ENCODE measurements at regions of chr2 and their contacts with region 1.

Region 1: DNA sequence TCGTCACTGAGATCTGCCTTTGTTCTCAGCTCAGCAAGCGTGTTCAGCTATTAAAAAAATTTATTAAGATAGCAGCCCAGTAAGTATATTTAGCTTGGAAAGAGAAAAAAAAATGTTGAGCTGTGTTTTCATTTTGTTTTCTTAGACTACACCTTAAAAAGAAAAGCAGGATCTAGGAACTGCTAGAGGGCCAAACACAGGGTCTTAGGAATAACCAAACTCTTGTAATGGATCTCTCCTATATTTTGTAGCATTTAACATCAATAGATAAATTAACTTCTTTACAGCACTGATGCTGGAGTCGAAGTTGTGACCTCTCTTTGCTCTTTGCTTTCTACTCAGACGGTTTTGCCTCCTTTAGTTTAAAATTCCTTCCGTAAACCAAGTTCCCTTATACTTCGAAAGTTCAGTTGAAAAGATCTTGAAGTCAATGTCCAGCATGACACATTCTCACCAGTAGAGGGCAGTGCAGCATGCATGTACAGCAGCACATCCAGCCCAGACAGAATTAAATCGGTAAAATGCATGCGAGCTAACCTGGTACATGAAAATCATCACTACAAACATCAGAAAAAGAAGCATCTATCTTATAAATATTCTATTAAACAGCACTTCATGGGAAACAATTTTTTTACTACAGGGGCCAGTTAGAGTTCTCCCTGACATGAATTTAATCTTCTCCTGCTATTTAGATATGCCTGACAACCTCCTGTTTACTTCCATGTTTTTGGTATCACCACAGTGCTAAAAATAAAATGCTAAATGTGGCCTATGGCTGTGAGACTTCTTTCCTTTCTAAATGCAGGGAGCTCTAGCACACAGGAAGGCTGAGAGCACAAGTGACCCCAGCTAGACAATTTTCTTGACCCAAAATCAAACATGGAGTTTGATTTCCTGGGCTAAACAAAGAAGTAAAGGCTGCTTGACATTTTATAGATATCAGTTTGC is 48.2 kb upstream of the MAP3K20 start:
- DNase-seq: peak; percentile 88
- H3K4me3 ChIP-seq: no peak overlapping the region
- H3K27ac ChIP-seq: peak overlapping the region; percentile 60 to 68 (median 66)
- H3K4me1 ChIP-seq: peaks cover 12 to 28% (median 17%) of the 10 kb centered on the region in 4 donors
- H3K27me3 ChIP-seq: no peaks in the 10 kb centered on the region
- CTCF ChIP-seq: peak; percentile 92 to 96 (median 94)
- EP300 ChIP-seq: no peak
- POLR2A ChIP-seq: no peak

Region 2: GRCh38 chr2:173218326-173219056 is 191.0 kb after region 1 on chr2:
- in situ Hi-C with region 1: loop called (anchors 5 to 10 kb)
- intact Hi-C with region 1: loop called (anchors 5 kb)
- DNase-seq: no peak
- H3K4me3 ChIP-seq: no peak overlapping the region
- H3K27ac ChIP-seq: peak overlapping the region; percentile 14 to 45 (median 28)
- H3K4me1 ChIP-seq: peaks cover 6 to 24% (median 13%) of the 10 kb centered on the region in 4 donors
- H3K27me3 ChIP-seq: no peaks in the 10 kb centered on the region
- CTCF ChIP-seq: no peak
- EP300 ChIP-seq: no peak
- POLR2A ChIP-seq: no peak

Region 3: GRCh38 chr2:173354601-173355131 is 327.2 kb after region 1 on chr2 and contains the start of gene CDCA7:
- in situ Hi-C with region 1: loop called in 1 of 4 experiments (anchors 25 kb)
- intact Hi-C with region 1: no loop called
- DNase-seq: peak; percentile 76
- H3K4me3 ChIP-seq: peak within 1 kb of the TSS; percentile 47 to 74 (median 64)
- H3K27ac ChIP-seq: peak within 1 kb of the TSS; percentile 56 to 85 (median 68)
- H3K4me1 ChIP-seq: peaks cover 0 to 33% (median 14%) of the 10 kb centered on the region in 4 donors
- H3K27me3 ChIP-seq: peaks cover 51% of the 10 kb centered on the region
- CTCF ChIP-seq: no peak
- EP300 ChIP-seq: no peak
- POLR2A ChIP-seq: peak; percentile 7
- total RNA-seq, gene CDCA7: 5.2 to 44.4 (median 11.8) TPM

Region 4: DNA sequence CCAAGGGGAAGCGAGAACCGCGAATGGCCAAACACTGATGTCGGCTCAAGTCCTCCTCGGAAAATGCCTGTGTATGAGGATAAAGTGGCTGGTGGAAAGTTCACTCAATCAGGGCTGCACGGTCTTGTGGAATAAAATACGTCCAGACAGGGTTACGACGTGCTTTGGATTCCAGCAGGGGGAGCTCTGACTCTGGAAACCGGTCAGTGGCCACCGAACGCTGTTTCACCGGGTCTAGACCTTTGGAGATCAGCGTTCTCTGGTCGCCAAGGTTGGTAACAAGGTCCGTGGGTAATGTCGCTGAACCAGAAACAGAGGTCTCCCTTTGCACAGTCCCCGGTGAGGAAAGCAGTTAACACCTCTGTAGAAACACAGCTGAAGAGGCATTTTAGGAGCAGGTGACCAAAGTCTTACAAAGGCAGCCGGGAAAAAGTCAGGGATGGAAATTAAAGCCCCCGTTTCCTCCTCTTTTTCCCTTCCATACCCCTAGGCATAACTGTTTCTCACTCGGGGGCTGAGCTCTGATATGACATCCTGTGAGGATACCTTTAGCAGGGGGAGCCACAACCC is 375.0 kb after region 1 on chr2:
- in situ Hi-C with region 1: loop called in 1 of 4 experiments (anchors 25 kb)
- intact Hi-C with region 1: no loop called
- DNase-seq: peak; percentile 81
- H3K4me3 ChIP-seq: no peak overlapping the region
- H3K27ac ChIP-seq: no peak overlapping the region
- H3K4me1 ChIP-seq: peaks cover 0 to 15% (median 2%) of the 10 kb centered on the region in 4 donors
- H3K27me3 ChIP-seq: peaks cover 63% of the 10 kb centered on the region
- CTCF ChIP-seq: peak; percentile 78 to 87 (median 84)
- EP300 ChIP-seq: no peak
- POLR2A ChIP-seq: no peak

Region 5: GRCh38 chr2:173412628-173413027 is 385.2 kb after region 1 on chr2:
- in situ Hi-C with region 1: no loop called
- intact Hi-C with region 1: no loop called
- DNase-seq: no peak
- H3K4me3 ChIP-seq: no peak overlapping the region
- H3K27ac ChIP-seq: no peak overlapping the region
- H3K4me1 ChIP-seq: no peaks in the 10 kb centered on the region
- H3K27me3 ChIP-seq: no peaks in the 10 kb centered on the region
- CTCF ChIP-seq: no peak
- EP300 ChIP-seq: no peak
- POLR2A ChIP-seq: no peak